B cell (primary cell): ENCODE measurements at regions of chr2 and their contacts with region 1.

Region 1: GRCh38 chr2:39492095-39492590 is 55.1 kb upstream of the MAP4K3 start:
- DNase-seq: peak; percentile 91
- ATAC-seq: peak; percentile 91
- H3K4me3 ChIP-seq: peak overlapping the region in 3 of 5 experiments; percentile 13 to 56 (median 26)
- H3K4me3 Mint-ChIP-seq: peak overlapping the region; percentile 81
- H3K27ac ChIP-seq: peak overlapping the region; percentile 80 to 81
- H3K27ac Mint-ChIP-seq: peak overlapping the region; percentile 88
- H3K4me1 ChIP-seq: peaks cover 35 to 43% of the 10 kb centered on the region in 2 donors
- H3K4me1 Mint-ChIP-seq: peaks cover 44% of the 10 kb centered on the region
- H3K27me3 ChIP-seq: peaks cover 0 to 21% (median 4%) of the 10 kb centered on the region in 4 experiments
- H3K27me3 Mint-ChIP-seq: peaks cover 18% of the 10 kb centered on the region
- CTCF ChIP-seq: no peak

Region 2: DNA sequence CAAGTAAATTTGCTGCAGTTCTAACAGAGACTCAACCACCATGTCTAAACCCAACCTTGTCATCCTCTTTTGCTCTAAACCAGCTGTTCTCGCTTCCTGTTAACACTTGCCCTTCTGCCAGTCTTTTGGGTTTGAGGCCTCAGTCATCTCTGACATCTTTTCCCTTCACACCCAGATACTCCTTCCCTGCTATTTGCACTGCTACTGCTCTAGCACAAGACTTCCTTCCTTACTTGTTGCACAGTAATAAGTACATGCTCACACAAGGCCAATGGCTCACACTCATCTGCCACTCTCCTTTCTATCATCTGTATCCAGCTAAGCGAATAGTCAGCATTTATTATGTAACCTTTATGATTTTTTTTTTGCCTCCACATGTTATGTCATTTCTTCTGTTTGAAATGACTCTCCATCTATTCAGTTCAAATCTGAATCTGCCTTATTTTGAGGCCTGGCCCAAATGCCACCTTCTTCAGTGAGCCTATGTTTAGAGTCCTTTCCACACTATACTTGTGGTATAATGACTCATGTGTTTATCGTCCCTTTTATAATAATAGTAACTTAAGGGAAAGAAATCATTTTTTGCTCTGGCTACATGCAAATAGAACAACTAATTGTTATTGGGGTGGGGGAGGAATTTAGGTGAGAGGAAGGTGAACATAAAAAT is 225.9 kb before region 1 on chr2:
- CTCF ChIA-PET with region 1: no interaction called
- POLR2A ChIA-PET with region 1: no interaction called
- intact Hi-C with region 1: loop called (anchors 10 kb)
- DNase-seq: peak; percentile 40
- ATAC-seq: peak; percentile 61
- H3K4me3 ChIP-seq: no peak overlapping the region
- H3K4me3 Mint-ChIP-seq: peak overlapping the region; percentile 73
- H3K27ac ChIP-seq: peak overlapping the region; percentile 33 to 73
- H3K27ac Mint-ChIP-seq: peak overlapping the region; percentile 91
- H3K4me1 ChIP-seq: peaks cover 20 to 25% of the 10 kb centered on the region in 2 donors
- H3K4me1 Mint-ChIP-seq: peaks cover 30% of the 10 kb centered on the region
- H3K27me3 ChIP-seq: no peaks in the 10 kb centered on the region
- H3K27me3 Mint-ChIP-seq: no peaks in the 10 kb centered on the region
- CTCF ChIP-seq: no peak

Region 3: GRCh38 chr2:39403311-39403710 is 88.8 kb before region 1 on chr2:
- CTCF ChIA-PET with region 1: no interaction called
- POLR2A ChIA-PET with region 1: no interaction called
- intact Hi-C with region 1: no loop called
- DNase-seq: no peak
- ATAC-seq: no peak
- H3K4me3 ChIP-seq: no peak overlapping the region
- H3K4me3 Mint-ChIP-seq: no peak overlapping the region
- H3K27ac ChIP-seq: no peak overlapping the region
- H3K27ac Mint-ChIP-seq: no peak overlapping the region
- H3K4me1 ChIP-seq: peaks cover 3 to 18% of the 10 kb centered on the region in 2 donors
- H3K4me1 Mint-ChIP-seq: peaks cover 41% of the 10 kb centered on the region
- H3K27me3 ChIP-seq: no peaks in the 10 kb centered on the region
- H3K27me3 Mint-ChIP-seq: no peaks in the 10 kb centered on the region
- CTCF ChIP-seq: no peak

Region 4: DNA sequence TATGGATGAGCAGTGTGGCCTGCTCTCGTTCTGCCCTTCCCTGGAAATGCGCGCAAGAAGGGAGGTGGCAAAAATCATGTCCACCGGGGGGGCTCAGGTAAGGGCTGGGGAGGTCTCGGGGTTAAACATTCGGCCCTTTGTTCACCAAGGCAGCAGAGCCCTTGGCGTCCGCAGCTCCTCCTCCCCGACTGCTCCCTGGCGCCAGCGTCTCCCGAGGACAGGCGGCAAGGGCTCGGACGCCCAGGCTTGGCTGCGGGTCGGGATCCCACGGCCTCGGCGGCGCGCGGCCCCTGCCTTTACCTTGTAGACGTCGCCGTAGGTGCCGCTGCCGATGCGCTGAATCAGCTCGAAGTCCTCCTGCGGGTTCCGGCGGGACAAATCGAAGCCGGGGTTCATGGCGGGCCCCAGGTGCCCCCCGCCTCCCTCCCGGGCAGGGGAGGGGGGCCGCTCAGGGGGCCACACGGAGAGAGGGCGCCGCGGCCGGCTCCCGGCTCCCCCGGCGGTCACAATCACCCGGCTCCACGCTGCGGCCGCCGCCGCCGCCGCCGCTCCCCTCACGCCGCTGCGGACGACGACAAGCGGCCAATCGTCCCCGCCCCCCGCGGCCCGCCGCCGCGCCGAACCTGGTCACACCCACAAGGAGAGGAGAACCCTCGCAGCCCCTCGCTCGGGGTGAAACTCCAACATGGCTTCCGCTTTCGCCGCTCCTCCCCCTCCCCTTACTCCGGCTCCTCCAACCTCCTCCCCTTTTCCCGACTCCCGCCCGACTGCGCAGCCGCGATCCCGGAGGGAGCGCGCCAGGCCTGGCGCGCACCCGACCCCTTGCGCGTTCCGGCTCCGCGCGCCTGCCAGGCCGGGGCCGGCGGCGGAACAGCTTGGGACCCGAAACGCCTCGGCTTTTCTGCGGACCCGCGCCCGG is 55.3 kb before region 1 on chr2 and contains the start of gene MAP4K3:
- CTCF ChIA-PET with region 1: no interaction called
- POLR2A ChIA-PET with region 1: no interaction called
- intact Hi-C with region 1: loop called (anchors 1 kb)
- DNase-seq: peak; percentile 85
- ATAC-seq: peak; percentile 78
- H3K4me3 ChIP-seq: peak within 1 kb of the TSS; percentile 71 to 85 (median 80)
- H3K4me3 Mint-ChIP-seq: peak within 1 kb of the TSS; percentile 88
- H3K27ac ChIP-seq: peak within 1 kb of the TSS; percentile 3 to 78
- H3K27ac Mint-ChIP-seq: peak within 1 kb of the TSS; percentile 87
- H3K4me1 ChIP-seq: peaks cover 17% of the 10 kb centered on the region in 2 donors
- H3K4me1 Mint-ChIP-seq: peaks cover 29% of the 10 kb centered on the region
- H3K27me3 ChIP-seq: no peaks in the 10 kb centered on the region
- H3K27me3 Mint-ChIP-seq: no peaks in the 10 kb centered on the region
- CTCF ChIP-seq: no peak
- total RNA-seq, gene MAP4K3: 28.3 and 31.3 TPM in 2 replicates

Region 5: GRCh38 chr2:39504790-39505335 is 12.7 kb after region 1 on chr2:
- CTCF ChIA-PET with region 1: no interaction called
- POLR2A ChIA-PET with region 1: no interaction called
- intact Hi-C with region 1: loop called (anchors 1 kb)
- DNase-seq: no peak
- ATAC-seq: no peak
- H3K4me3 ChIP-seq: peak overlapping the region in 1 of 5 experiments; percentile 11
- H3K4me3 Mint-ChIP-seq: peak overlapping the region; percentile 62
- H3K27ac ChIP-seq: no peak overlapping the region
- H3K27ac Mint-ChIP-seq: no peak overlapping the region
- H3K4me1 ChIP-seq: peaks cover 21 to 25% of the 10 kb centered on the region in 2 donors
- H3K4me1 Mint-ChIP-seq: peaks cover 23% of the 10 kb centered on the region
- H3K27me3 ChIP-seq: peaks cover 0 to 4% (median 2%) of the 10 kb centered on the region in 4 experiments
- H3K27me3 Mint-ChIP-seq: peaks cover 21% of the 10 kb centered on the region
- CTCF ChIP-seq: no peak

Region 6: GRCh38 chr2:39696838-39697237 is 204.7 kb after region 1 on chr2:
- CTCF ChIA-PET with region 1: no interaction called
- POLR2A ChIA-PET with region 1: no interaction called
- intact Hi-C with region 1: no loop called
- DNase-seq: no peak
- ATAC-seq: no peak
- H3K4me3 ChIP-seq: no peak overlapping the region
- H3K4me3 Mint-ChIP-seq: no peak overlapping the region
- H3K27ac ChIP-seq: no peak overlapping the region
- H3K27ac Mint-ChIP-seq: no peak overlapping the region
- H3K4me1 ChIP-seq: no peaks in the 10 kb centered on the region
- H3K4me1 Mint-ChIP-seq: no peaks in the 10 kb centered on the region
- H3K27me3 ChIP-seq: no peaks in the 10 kb centered on the region
- H3K27me3 Mint-ChIP-seq: peaks cover 17% of the 10 kb centered on the region
- CTCF ChIP-seq: peak; percentile 23

Region 7: GRCh38 chr2:39728941-39729351 is 236.8 kb after region 1 on chr2:
- CTCF ChIA-PET with region 1: interaction called, 13 read pairs
- POLR2A ChIA-PET with region 1: no interaction called
- intact Hi-C with region 1: no loop called
- DNase-seq: peak; percentile 42
- ATAC-seq: peak; percentile 45
- H3K4me3 ChIP-seq: no peak overlapping the region
- H3K4me3 Mint-ChIP-seq: no peak overlapping the region
- H3K27ac ChIP-seq: no peak overlapping the region
- H3K27ac Mint-ChIP-seq: peak overlapping the region; percentile 38
- H3K4me1 ChIP-seq: peaks cover 0 to 14% of the 10 kb centered on the region in 2 donors
- H3K4me1 Mint-ChIP-seq: peaks cover 9% of the 10 kb centered on the region
- H3K27me3 ChIP-seq: no peaks in the 10 kb centered on the region
- H3K27me3 Mint-ChIP-seq: no peaks in the 10 kb centered on the region
- CTCF ChIP-seq: peak; percentile 79